Activated CD8-positive, alpha-beta T cell treated with anti-CD3 and anti-CD28 coated beads for 36 hours (primary cell): ENCODE measurements at regions of chr20 and their contacts with region 1.

Region 1: GRCh38 chr20:20452254-20452676 is 84.4 kb downstream of the INSM1 start:
- DNase-seq: peak; percentile 77
- ATAC-seq: peak; percentile 96
- H3K4me3 Mint-ChIP-seq: peak overlapping the region; percentile 63
- H3K27ac Mint-ChIP-seq: peak overlapping the region; percentile 76
- H3K4me1 Mint-ChIP-seq: peaks cover 32% of the 10 kb centered on the region
- H3K27me3 Mint-ChIP-seq: no peaks in the 10 kb centered on the region
- CTCF ChIP-seq: no peak

Region 2: GRCh38 chr20:20568604-20569205 is 116.4 kb after region 1 on chr20:
- CTCF ChIA-PET with region 1: interaction called, 4 read pairs
- POLR2A ChIA-PET with region 1: no interaction called
- intact Hi-C with region 1: loop called (anchors 5 kb)
- DNase-seq: peak; percentile 55
- ATAC-seq: no peak
- H3K4me3 Mint-ChIP-seq: no peak overlapping the region
- H3K27ac Mint-ChIP-seq: no peak overlapping the region
- H3K4me1 Mint-ChIP-seq: no peaks in the 10 kb centered on the region
- H3K27me3 Mint-ChIP-seq: no peaks in the 10 kb centered on the region
- CTCF ChIP-seq: peak; percentile 77